Astrocyte of the cerebellum (primary cell): ENCODE measurements at regions of chr3 and their contacts with region 1.

Region 1: DNA sequence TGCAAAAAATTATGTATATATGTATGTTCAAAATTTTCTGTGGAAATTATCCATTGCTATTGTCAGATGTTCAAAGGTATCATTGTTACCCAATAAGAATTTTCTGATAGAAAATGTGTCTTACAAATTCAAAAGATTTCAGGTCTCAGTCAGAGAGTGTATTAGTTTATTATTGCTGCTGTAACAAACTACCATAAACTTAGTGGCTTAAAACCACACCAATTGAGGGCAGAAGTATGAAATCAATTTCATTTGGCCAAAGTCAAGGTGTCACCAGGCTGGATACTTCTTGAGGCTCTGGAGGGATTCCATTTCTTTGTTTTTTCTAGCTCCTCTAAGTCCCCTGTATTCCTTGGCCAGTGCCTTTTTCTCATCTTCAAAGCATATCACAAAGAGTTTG is 914.4 kb upstream of the ROBO1 start:
- DNase-seq: no peak
- H3K4me3 ChIP-seq: no peak overlapping the region
- CTCF ChIP-seq: no peak

Region 2: GRCh38 chr3:79521238-79521848 is 1160.9 kb before region 1 on chr3:
- in situ Hi-C with region 1: loop called (anchors 5 kb)
- DNase-seq: peak; percentile 44
- H3K4me3 ChIP-seq: no peak overlapping the region
- CTCF ChIP-seq: peak; percentile 37